Activated naive CD8-positive, alpha-beta T cell treated with anti-CD3 and anti-CD28 coated beads, Interleukin-2, amount 10 ng/mL, durations not matched to agents 7 days and 5 days (primary cell): ENCODE measurements at regions of chr7 and their contacts with region 1.

Region 1: DNA sequence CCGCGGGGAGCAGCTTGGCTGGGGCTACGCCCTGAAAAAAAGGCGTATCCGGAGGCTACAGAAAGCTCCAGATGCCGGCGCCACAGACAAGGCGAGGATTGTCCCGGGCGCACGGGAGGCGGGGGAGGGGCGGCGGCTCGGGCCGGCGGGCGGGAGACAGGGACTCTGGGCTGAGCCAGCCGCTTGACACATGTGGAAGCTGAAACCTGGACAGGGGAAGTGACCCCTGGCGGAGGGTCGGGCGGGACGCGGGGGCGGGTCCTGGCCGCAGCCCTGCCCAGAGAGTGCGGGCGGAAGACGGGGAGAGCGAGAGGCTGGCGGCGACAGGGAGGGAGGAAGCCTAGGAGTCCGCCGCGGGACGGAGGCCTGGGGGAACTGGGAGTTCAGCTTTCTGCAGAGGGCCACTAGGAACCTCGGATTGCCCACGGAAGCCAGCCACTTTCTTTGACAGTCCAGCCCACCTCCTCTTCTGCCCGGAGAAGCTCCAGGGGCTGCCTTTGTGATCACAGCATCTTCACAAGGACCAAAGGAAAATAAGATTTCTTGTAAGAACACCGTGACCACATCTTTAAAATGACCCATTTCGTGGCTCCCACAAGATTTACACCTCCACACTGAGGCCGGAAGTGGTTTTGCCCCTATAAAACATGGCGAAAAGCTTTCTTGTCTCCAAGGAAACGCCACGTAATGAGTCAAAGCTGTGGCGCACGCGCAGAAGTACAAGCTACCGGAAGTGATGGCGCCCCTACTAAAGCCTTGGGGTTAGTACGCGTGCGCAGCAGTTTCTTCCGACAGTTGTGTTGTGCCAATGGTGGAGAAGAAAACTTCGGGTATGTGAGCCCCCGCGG is at the starts of genes PLOD3 and ZNHIT1:
- DNase-seq: peak; percentile 91
- ATAC-seq: peak; percentile 79
- H3K4me3 Mint-ChIP-seq: peak within 1 kb of the TSS; percentile 90
- H3K27ac Mint-ChIP-seq: peak within 1 kb of the TSS; percentile 88
- H3K4me1 Mint-ChIP-seq: peaks cover 22% of the 10 kb centered on the region
- H3K27me3 Mint-ChIP-seq: no peaks in the 10 kb centered on the region
- total RNA-seq, gene PLOD3: 48.9 to 51.0 TPM
- total RNA-seq, gene ZNHIT1: 54.2 to 55.8 TPM

Region 2: DNA sequence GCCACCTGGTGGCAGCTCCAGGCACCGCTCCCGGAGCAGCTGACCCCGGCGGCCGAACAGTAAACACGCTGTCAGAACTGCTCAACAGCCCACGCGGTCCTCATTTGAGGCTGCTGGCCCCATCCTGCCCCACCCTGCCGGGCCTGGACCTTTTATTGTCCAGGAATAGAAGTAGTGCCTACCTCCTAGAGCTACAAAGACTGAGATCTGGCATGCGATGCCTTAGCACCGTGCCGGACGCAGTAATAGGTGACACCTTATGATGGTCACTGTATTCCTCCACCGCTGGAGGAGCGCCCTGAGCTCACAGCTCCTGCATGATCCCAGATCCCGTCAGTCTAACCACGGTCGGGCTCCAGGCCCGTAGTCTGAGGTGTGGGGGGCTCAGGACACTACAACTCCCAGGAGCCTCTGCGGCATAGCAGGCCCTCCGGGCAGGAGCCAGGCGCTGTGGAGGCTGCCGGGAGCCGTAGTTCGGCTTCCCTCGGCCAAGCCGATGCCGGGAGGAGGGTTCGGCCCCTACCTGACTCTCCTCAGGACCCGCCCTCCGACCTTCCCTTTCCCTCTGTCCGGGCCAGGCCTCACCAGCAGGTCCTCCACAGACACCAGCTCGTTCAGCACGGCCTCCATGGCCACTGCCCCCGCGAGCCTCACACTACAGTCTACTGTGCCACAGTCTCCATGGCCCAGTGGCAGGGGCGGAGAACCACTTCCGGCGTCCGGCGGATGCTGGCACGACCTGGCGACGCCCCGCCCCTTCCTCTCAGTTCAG is 26.9 kb after region 1 on chr7 and contains the start of gene FIS1:
- POLR2A ChIA-PET with region 1: interaction called, 36 read pairs
- DNase-seq: peak; percentile 97
- ATAC-seq: peak; percentile 95
- H3K4me3 Mint-ChIP-seq: peak within 1 kb of the TSS; percentile 98
- H3K27ac Mint-ChIP-seq: peak within 1 kb of the TSS; percentile 99
- H3K4me1 Mint-ChIP-seq: peaks cover 21% of the 10 kb centered on the region
- H3K27me3 Mint-ChIP-seq: no peaks in the 10 kb centered on the region
- total RNA-seq, gene FIS1: 91.7 to 106 TPM

Region 3: DNA sequence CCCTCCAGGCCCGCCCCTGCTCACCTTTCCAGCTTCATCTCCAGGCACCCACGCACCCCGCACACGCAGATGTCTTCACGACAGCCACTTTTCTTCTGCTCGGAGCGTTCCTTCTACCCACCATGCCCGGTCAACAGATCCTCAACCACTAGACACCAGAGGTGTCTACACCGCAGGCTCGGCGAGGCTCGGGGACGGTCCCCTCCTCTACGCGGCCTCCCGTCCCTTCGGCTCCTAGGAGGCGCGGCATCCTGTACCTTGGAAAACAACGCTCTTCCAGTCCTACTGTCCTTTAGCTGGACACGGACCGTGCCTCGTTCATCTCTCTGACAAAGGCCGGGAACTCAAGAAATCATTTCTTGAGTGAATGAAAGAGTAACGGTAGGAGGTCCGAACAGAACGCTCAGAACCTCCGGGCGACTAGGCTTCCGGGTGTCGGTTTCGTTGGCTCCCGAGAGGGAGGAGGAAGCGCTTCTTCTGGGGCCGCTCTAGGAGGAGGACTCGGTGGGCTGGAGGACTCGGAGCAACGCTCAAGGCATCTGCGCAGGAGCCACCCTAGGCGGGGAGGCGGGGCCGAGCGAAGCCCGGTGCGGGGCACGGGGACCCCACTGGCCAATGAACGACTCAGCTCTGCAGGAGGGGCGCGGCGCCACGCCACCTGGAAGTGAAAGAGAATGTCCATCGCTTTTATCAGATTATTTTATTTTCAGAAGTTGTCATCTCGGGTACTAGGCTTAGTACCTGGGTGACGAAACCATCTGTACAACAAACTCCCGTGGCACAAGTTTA is 34.5 kb after region 1 on chr7:
- POLR2A ChIA-PET with region 1: interaction called, 13 read pairs
- DNase-seq: peak; percentile 99
- ATAC-seq: peak; percentile 100
- H3K4me3 Mint-ChIP-seq: peak overlapping the region; percentile 99
- H3K27ac Mint-ChIP-seq: peak overlapping the region; percentile 98
- H3K4me1 Mint-ChIP-seq: peaks cover 20% of the 10 kb centered on the region
- H3K27me3 Mint-ChIP-seq: peaks cover 5% of the 10 kb centered on the region

Region 4: DNA sequence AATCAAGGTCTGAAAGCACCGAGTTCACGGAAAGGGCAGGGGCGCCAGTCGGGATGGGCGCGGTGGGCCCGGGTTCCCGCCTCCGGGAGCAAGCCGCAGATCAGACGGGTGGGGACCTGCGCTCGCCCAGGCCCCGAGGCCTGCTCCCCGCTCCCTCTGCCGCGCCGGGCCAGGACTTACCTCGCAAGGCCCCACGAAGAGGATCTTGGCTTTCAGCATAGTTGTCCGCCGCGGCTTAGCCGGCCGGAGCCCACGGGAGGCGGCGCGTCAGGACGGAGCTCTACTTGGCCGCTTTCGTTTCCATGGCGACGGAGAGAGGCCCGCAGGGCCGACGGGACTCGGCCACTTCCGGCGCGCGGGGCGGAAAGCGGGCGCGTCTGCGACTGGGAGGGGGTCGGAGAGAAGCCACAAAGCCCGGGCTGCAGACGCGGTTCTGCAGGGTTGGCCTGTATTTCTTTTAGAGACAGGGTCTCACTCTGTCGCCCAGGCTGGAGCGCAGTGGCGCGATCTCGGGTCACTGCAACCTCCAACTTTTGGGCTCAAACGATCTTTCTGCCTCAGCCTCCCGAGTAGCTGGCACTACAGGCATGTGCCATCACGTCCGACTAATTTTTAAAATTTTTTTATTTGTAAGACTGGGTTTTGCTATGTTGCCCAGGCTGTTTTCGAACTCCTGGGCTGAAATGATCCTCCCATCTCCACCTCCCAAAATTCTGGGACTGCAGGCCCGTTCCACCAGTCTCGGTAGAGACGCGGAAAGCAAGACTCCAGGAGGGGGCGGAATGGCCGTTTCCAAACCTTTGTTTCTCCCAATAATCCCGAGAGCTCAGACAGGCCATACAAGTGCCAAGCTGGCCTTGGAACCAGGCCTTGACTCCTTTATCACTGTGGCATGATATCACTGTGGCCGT is 104.1 kb after region 1 on chr7 and contains the start of gene IFT22:
- POLR2A ChIA-PET with region 1: interaction called, 11 read pairs
- DNase-seq: peak; percentile 90
- ATAC-seq: peak; percentile 95
- H3K4me3 Mint-ChIP-seq: peak within 1 kb of the TSS; percentile 91
- H3K27ac Mint-ChIP-seq: peak within 1 kb of the TSS; percentile 85
- H3K4me1 Mint-ChIP-seq: peaks cover 7% of the 10 kb centered on the region
- H3K27me3 Mint-ChIP-seq: no peaks in the 10 kb centered on the region
- total RNA-seq, gene IFT22: 6.1 to 6.3 TPM